Activated T-helper 2 cell treated with anti-CD3 and anti-CD28 coated beads, Interferon-gamma antibody, Interleukin-2, Interleukin-4, amounts not matched to agents 10 μg/mL and 5 μg/mL and 100 μg/mL, durations not matched to agents 14 hours and 24 hours and 36 hours (primary cell): ENCODE measurements at regions of chr15 and their contacts with region 1.

Region 1: GRCh38 chr15:44728576-44729407 is 7.5 kb upstream of the TRIM69 start:
- DNase-seq: peak; percentile 97
- H3K4me3 Mint-ChIP-seq: peak overlapping the region; percentile 98
- H3K27ac Mint-ChIP-seq: peak overlapping the region; percentile 97
- H3K4me1 Mint-ChIP-seq: peaks cover 60% of the 10 kb centered on the region
- H3K27me3 Mint-ChIP-seq: no peaks in the 10 kb centered on the region

Region 2: GRCh38 chr15:43824302-43825246 is 904.2 kb before region 1 on chr15 and contains the start of gene MFAP1:
- intact Hi-C with region 1: loop called (anchors 10 kb)
- DNase-seq: peak; percentile 91
- H3K4me3 Mint-ChIP-seq: peak within 1 kb of the TSS; percentile 97
- H3K27ac Mint-ChIP-seq: peak within 1 kb of the TSS; percentile 98
- H3K4me1 Mint-ChIP-seq: peaks cover 28% of the 10 kb centered on the region
- H3K27me3 Mint-ChIP-seq: no peaks in the 10 kb centered on the region
- total RNA-seq, gene MFAP1: 43.7 and 44.3 TPM in 2 replicates

Region 3: GRCh38 chr15:44536962-44537734 is 191.6 kb before region 1 on chr15 and contains the start of gene EIF3J:
- intact Hi-C with region 1: loop called (anchors 5 kb)
- DNase-seq: peak; percentile 96
- H3K4me3 Mint-ChIP-seq: peak within 1 kb of the TSS; percentile 98
- H3K27ac Mint-ChIP-seq: peak within 1 kb of the TSS; percentile 99
- H3K4me1 Mint-ChIP-seq: peaks cover 41% of the 10 kb centered on the region
- H3K27me3 Mint-ChIP-seq: no peaks in the 10 kb centered on the region
- total RNA-seq, gene EIF3J: 127 and 135 TPM in 2 replicates

Region 4: DNA sequence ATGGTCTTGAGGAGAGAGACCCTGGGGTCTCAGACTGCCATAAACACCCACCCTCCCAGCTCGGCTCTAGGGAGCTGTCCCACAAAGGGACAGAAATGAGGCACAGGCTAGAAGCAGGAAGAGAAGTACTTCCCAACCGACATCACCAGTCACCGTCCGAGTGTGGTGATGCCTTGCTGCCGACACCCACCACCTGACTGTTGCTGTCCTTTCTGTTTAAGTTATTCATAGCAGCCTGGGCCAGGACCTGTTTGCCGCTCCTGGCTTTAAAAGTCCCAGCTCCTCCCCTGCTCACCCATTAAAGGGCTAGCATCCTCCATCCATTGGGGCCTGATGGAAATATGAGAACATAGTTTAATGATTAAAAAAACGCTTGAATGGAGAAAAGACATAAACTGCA is 52.1 kb before region 1 on chr15:
- intact Hi-C with region 1: loop called (anchors 2 kb)
- DNase-seq: no peak
- H3K4me3 Mint-ChIP-seq: peak overlapping the region; percentile 72
- H3K27ac Mint-ChIP-seq: peak overlapping the region; percentile 95
- H3K4me1 Mint-ChIP-seq: peaks cover 60% of the 10 kb centered on the region
- H3K27me3 Mint-ChIP-seq: no peaks in the 10 kb centered on the region

Region 5: DNA sequence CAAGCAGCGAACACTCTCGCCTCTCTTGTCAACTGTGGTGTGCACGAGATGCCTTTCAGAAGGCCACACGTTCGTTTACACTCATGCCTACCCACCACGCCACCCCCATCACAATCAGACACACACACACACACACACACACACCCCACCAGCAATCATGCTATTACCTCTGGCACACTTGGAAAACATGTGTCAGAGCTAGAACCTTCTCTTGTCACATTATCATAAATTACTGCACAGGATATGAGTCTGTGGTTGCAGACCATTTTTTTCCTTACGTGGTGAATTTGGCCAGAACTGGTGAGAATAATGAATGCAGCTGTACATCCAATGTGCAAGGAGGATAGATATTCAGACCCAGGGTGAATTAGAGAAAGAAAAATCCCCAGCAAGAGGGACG is 60.0 kb after region 1 on chr15:
- intact Hi-C with region 1: no loop called
- DNase-seq: peak; percentile 22
- H3K4me3 Mint-ChIP-seq: no peak overlapping the region
- H3K27ac Mint-ChIP-seq: peak overlapping the region; percentile 70
- H3K4me1 Mint-ChIP-seq: peaks cover 42% of the 10 kb centered on the region
- H3K27me3 Mint-ChIP-seq: no peaks in the 10 kb centered on the region

Region 6: GRCh38 chr15:45198337-45199135 is 469.7 kb after region 1 on chr15:
- intact Hi-C with region 1: loop called (anchors 5 kb)
- DNase-seq: peak; percentile 95
- H3K4me3 Mint-ChIP-seq: no peak overlapping the region
- H3K27ac Mint-ChIP-seq: no peak overlapping the region
- H3K4me1 Mint-ChIP-seq: peaks cover 14% of the 10 kb centered on the region
- H3K27me3 Mint-ChIP-seq: no peaks in the 10 kb centered on the region